Activated naive CD4-positive, alpha-beta T cell treated with anti-CD3 and anti-CD28 coated beads, Interleukin-2, amount 10 ng/mL, durations not matched to agents 7 days and 5 days (primary cell): ENCODE measurements at regions of chr4 and their contacts with region 1.

Region 1: GRCh38 chr4:77203380-77204197 is 46.6 kb downstream of the CCNG2 start:
- DNase-seq: peak; percentile 75
- H3K4me3 Mint-ChIP-seq: no peak overlapping the region
- H3K27ac Mint-ChIP-seq: no peak overlapping the region
- H3K4me1 Mint-ChIP-seq: peaks cover 6% of the 10 kb centered on the region
- H3K27me3 Mint-ChIP-seq: peaks cover 6% of the 10 kb centered on the region

Region 2: GRCh38 chr4:77044461-77045150 is 159.0 kb before region 1 on chr4:
- CTCF ChIA-PET with region 1: interaction called, 15 read pairs
- DNase-seq: no peak
- H3K4me3 Mint-ChIP-seq: no peak overlapping the region
- H3K27ac Mint-ChIP-seq: no peak overlapping the region
- H3K4me1 Mint-ChIP-seq: peaks cover 4% of the 10 kb centered on the region
- H3K27me3 Mint-ChIP-seq: no peaks in the 10 kb centered on the region

Region 3: DNA sequence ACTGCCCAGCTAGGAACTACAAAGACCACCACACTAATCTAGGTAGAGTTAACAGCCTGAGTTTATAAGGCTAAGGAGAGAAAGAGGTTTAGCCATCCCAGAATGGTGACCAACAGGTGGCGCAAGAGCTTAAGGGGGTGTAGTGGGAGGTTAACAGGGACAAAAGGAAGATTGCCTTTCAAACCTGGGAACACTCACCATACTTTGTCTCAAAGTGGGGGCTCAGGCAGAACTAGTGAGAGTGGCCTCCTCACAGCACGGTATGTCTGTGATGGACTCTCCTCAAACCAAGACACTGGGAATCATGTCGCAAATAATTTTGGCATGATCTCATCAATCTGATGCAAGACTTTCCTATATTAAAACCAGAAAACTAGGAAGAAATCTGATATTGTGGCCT is 151.2 kb before region 1 on chr4:
- CTCF ChIA-PET with region 1: interaction called, 54 read pairs
- DNase-seq: peak; percentile 75
- H3K4me3 Mint-ChIP-seq: no peak overlapping the region
- H3K27ac Mint-ChIP-seq: no peak overlapping the region
- H3K4me1 Mint-ChIP-seq: no peaks in the 10 kb centered on the region
- H3K27me3 Mint-ChIP-seq: no peaks in the 10 kb centered on the region

Region 4: DNA sequence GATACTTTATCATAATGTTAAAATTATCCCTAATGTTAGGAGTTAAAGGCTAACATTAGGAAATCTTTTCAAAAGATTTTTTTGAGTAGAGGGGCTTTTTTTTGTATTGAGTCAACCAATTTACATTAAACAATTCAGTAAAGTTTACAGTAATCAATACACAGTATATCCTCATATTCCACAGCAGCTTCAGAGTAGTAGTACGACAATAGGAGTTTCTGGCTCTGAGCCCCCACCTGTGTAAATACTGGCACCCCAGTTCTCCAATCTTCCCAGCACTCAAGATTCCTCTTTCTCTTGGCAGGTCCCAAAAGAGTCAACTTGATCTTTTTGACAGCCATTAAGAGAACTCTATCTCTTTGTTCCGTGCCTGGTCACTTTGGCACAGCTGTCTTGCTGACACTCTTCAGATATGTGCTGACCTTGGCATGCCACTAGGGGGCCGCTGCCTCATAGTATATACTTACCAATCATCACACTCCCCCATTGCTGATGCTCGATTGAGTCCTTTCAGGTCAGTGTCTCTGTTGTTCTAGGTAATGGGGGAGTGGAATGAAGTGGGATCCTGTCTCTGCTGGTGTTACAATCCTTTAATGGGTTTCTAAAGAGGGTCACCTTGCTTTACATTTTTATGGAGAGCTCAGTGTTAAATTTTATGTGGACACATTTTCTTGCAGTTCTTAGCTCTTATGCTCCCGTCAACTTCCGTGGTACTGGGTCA is 108.3 kb before region 1 on chr4:
- CTCF ChIA-PET with region 1: interaction called, 130 read pairs
- DNase-seq: peak; percentile 82
- H3K4me3 Mint-ChIP-seq: no peak overlapping the region
- H3K27ac Mint-ChIP-seq: no peak overlapping the region
- H3K4me1 Mint-ChIP-seq: peaks cover 7% of the 10 kb centered on the region
- H3K27me3 Mint-ChIP-seq: peaks cover 4% of the 10 kb centered on the region

Region 5: GRCh38 chr4:77156533-77156911 is 47.1 kb before region 1 on chr4:
- CTCF ChIA-PET with region 1: interaction called, 15 read pairs
- DNase-seq: peak; percentile 97
- H3K4me3 Mint-ChIP-seq: peak overlapping the region; percentile 91
- H3K27ac Mint-ChIP-seq: peak overlapping the region; percentile 97
- H3K4me1 Mint-ChIP-seq: peaks cover 39% of the 10 kb centered on the region
- H3K27me3 Mint-ChIP-seq: peaks cover 8% of the 10 kb centered on the region

Region 6: DNA sequence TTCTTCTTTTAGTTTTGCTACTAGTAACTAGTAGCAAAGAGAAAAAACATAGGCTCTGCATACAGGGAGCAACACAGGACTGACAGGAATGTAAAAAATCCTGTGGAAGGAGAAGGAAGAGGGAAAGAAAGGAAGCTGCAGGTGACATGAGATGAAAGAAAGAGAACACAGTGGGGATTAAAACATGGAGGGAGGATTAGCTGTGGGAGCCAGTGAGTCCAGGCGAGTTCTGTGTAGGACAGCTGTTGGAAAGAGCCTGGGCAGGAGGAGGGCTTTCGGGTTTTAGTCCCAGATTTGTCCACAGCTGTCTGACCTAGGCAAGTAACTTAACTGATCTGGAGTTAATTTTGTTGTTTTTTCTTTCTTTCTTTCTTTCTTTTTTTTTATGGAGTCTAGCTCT is 25.0 kb before region 1 on chr4:
- CTCF ChIA-PET with region 1: interaction called, 12 read pairs
- DNase-seq: no peak
- H3K4me3 Mint-ChIP-seq: no peak overlapping the region
- H3K27ac Mint-ChIP-seq: no peak overlapping the region
- H3K4me1 Mint-ChIP-seq: no peaks in the 10 kb centered on the region
- H3K27me3 Mint-ChIP-seq: peaks cover 42% of the 10 kb centered on the region

Region 7: GRCh38 chr4:77342170-77342810 is 138.7 kb after region 1 on chr4:
- CTCF ChIA-PET with region 1: no interaction called
- DNase-seq: no peak
- H3K4me3 Mint-ChIP-seq: no peak overlapping the region
- H3K27ac Mint-ChIP-seq: peak overlapping the region; percentile 15
- H3K4me1 Mint-ChIP-seq: no peaks in the 10 kb centered on the region
- H3K27me3 Mint-ChIP-seq: no peaks in the 10 kb centered on the region